Activated CD8-positive, alpha-beta memory T cell treated with anti-CD3 and anti-CD28 coated beads, Interleukin-2, amount 10 ng/mL, durations not matched to agents 7 days and 5 days (primary cell): ENCODE measurements at regions of chr3 and their contacts with region 1.

Region 1: GRCh38 chr3:52934630-52935530 is 37.5 kb upstream of the STIMATE start:
- DNase-seq: peak; percentile 74
- ATAC-seq: peak; percentile 96
- H3K4me3 Mint-ChIP-seq: no peak overlapping the region
- H3K27ac Mint-ChIP-seq: peak overlapping the region; percentile 3
- H3K4me1 Mint-ChIP-seq: peaks cover 7% of the 10 kb centered on the region
- H3K27me3 Mint-ChIP-seq: no peaks in the 10 kb centered on the region

Region 2: GRCh38 chr3:52845691-52846431 is 89.0 kb before region 1 on chr3:
- CTCF ChIA-PET with region 1: interaction called, 10 read pairs
- DNase-seq: no peak
- ATAC-seq: peak; percentile 55
- H3K4me3 Mint-ChIP-seq: no peak overlapping the region
- H3K27ac Mint-ChIP-seq: no peak overlapping the region
- H3K4me1 Mint-ChIP-seq: peaks cover 11% of the 10 kb centered on the region
- H3K27me3 Mint-ChIP-seq: no peaks in the 10 kb centered on the region